A549 (cell line): ENCODE measurements at regions of chr14 and their contacts with region 1.

Region 1: GRCh38 chr14:50619556-50620141 is 48.5 kb downstream of the SAV1 start:
- DNase-seq: peak; percentile 34 to 55
- ATAC-seq: peak; percentile 94 to 95
- H3K4me3 ChIP-seq: no peak overlapping the region
- H3K27ac ChIP-seq: no peak overlapping the region
- H3K4me1 ChIP-seq: no peaks in the 10 kb centered on the region
- CTCF ChIP-seq: peak; percentile 60
- EP300 ChIP-seq: no peak
- POLR2A ChIP-seq: no peak
- RAD21 ChIP-seq: peak; percentile 60 to 72

Region 2: GRCh38 chr14:50599700-50600444 is 19.8 kb before region 1 on chr14:
- CTCF ChIA-PET with region 1: interaction called, 14 read pairs
- POLR2A ChIA-PET with region 1: no interaction called
- DNase-seq: peak; percentile 14 to 62
- ATAC-seq: peak; percentile 79 to 82; a peak in 4 of 6 replicates
- H3K4me3 ChIP-seq: peak overlapping the region; percentile 31; the same call in 2 of the 3 replicates
- H3K27ac ChIP-seq: peak overlapping the region; percentile 35 to 74; a peak in 5 of 6 replicates
- H3K4me1 ChIP-seq: peaks cover 20% of the 10 kb centered on the region
- CTCF ChIP-seq: peak; percentile 85
- EP300 ChIP-seq: no peak
- POLR2A ChIP-seq: no peak
- RAD21 ChIP-seq: peak; percentile 78 to 79

Region 3: GRCh38 chr14:50631408-50631821 is 11.8 kb after region 1 on chr14:
- CTCF ChIA-PET with region 1: interaction called, 35 read pairs
- POLR2A ChIA-PET with region 1: no interaction called
- DNase-seq: no peak
- ATAC-seq: no peak
- H3K4me3 ChIP-seq: no peak overlapping the region
- H3K27ac ChIP-seq: no peak overlapping the region
- H3K4me1 ChIP-seq: no peaks in the 10 kb centered on the region
- CTCF ChIP-seq: no peak
- EP300 ChIP-seq: no peak
- POLR2A ChIP-seq: no peak
- RAD21 ChIP-seq: no peak

Region 4: GRCh38 chr14:50778721-50779483 is 159.3 kb after region 1 on chr14:
- CTCF ChIA-PET with region 1: interaction called, 61 read pairs
- POLR2A ChIA-PET with region 1: no interaction called
- DNase-seq: no peak
- ATAC-seq: no peak
- H3K4me3 ChIP-seq: no peak overlapping the region
- H3K27ac ChIP-seq: no peak overlapping the region
- H3K4me1 ChIP-seq: peaks cover 5% of the 10 kb centered on the region; the same call in 1 of the 3 replicates
- CTCF ChIP-seq: no peak
- EP300 ChIP-seq: no peak
- POLR2A ChIP-seq: no peak
- RAD21 ChIP-seq: no peak